ENCODE measurements at regions of chr18 and their contacts with region 1.

Region 1: GRCh38 chr18:11937874-11938478 is 29.9 kb upstream of the MPPE1 start:
- DNase-seq: peak; percentile 85
- H3K4me3 ChIP-seq: no peak overlapping the region
- H3K27ac ChIP-seq: no peak overlapping the region
- H3K4me1 ChIP-seq: no peaks in the 10 kb centered on the region
- H3K27me3 ChIP-seq: no peaks in the 10 kb centered on the region
- CTCF ChIP-seq: peak; percentile 81 to 87 (median 86)
- EP300 ChIP-seq: no peak
- POLR2A ChIP-seq: no peak

Region 2: GRCh38 chr18:11688989-11689668 is 248.8 kb before region 1 on chr18 and contains the start of gene GNAL:
- in situ Hi-C with region 1: no loop called
- intact Hi-C with region 1: no loop called
- DNase-seq: peak; percentile 79
- H3K4me3 ChIP-seq: peak within 1 kb of the TSS; percentile 38 to 72 (median 60)
- H3K27ac ChIP-seq: peak within 1 kb of the TSS; percentile 44 to 85 (median 66)
- H3K4me1 ChIP-seq: peaks cover 6 to 16% (median 6%) of the 10 kb centered on the region in 4 donors
- H3K27me3 ChIP-seq: peaks cover 38% of the 10 kb centered on the region
- CTCF ChIP-seq: no peak
- EP300 ChIP-seq: peak; percentile 17
- POLR2A ChIP-seq: no peak
- total RNA-seq, gene GNAL: 2.9 to 7.4 (median 7.2) TPM

Region 3: DNA sequence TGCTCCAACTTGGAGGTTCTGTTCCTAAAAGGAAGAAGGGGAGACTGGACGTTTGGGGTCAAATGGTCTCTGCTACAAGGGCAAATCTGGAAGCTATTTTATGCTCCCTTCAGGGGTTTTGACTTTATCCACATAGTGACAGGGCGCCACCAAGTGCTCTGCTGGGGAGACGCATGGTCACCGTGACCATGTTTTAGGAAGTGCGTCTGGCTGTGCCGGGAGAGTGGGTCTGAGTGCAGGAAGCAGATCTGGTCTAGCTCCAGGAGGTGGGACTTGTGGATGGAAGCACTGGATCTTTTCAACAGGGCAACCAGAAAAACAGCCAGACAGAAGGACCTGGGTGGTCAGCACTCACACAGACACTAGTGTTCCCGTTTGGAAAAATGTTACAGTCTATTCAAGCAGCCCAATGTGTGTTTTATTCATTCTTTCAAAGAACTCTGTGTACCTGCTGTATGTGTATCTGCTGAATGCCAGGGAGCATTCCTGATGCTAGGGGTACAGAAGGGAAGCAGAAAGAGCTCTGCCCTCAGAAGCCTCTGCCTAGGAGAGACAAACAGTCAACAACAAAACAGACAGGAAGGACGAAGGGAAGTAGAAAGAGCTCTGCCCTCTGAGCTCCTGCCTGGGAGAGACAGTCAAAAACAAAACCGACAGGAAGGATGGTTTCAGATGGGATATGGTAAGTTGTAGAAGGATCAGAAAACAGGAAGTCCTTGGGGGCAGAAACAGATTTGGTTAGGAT is 57.6 kb after region 1 on chr18:
- in situ Hi-C with region 1: loop called in 2 of 4 experiments (anchors 10 kb)
- intact Hi-C with region 1: loop called (anchors 5 kb)
- DNase-seq: peak; percentile 81
- H3K4me3 ChIP-seq: no peak overlapping the region
- H3K27ac ChIP-seq: peak overlapping the region; percentile 47 to 78 (median 66)
- H3K4me1 ChIP-seq: peaks cover 16 to 54% (median 27%) of the 10 kb centered on the region in 4 donors
- H3K27me3 ChIP-seq: no peaks in the 10 kb centered on the region
- CTCF ChIP-seq: peak; percentile 68 to 81 (median 73)
- EP300 ChIP-seq: no peak
- POLR2A ChIP-seq: no peak

Region 4: GRCh38 chr18:12038639-12039417 is 100.9 kb after region 1 on chr18:
- in situ Hi-C with region 1: loop called (anchors 10 kb)
- intact Hi-C with region 1: loop called (anchors 5 kb)
- DNase-seq: peak; percentile 89
- H3K4me3 ChIP-seq: peak overlapping the region; percentile 3 to 65 (median 43)
- H3K27ac ChIP-seq: peak overlapping the region in 3 of 4 donors; percentile 4 to 36 (median 33)
- H3K4me1 ChIP-seq: peaks cover 0 to 12% (median 10%) of the 10 kb centered on the region in 4 donors
- H3K27me3 ChIP-seq: no peaks in the 10 kb centered on the region
- CTCF ChIP-seq: peak; percentile 98 to 99 (median 98)
- EP300 ChIP-seq: no peak
- POLR2A ChIP-seq: no peak